Mammary epithelial cell (primary cell): ENCODE measurements at regions of chr10 and their contacts with region 1.

Region 1: GRCh38 chr10:120423431-120424197 is 33.4 kb upstream of the PLPP4 start:
- DNase-seq: peak; percentile 61
- H3K4me3 ChIP-seq: no peak overlapping the region
- H3K27ac ChIP-seq: no peak overlapping the region
- H3K4me1 ChIP-seq: peaks cover 12% of the 10 kb centered on the region
- H3K27me3 ChIP-seq: no peaks in the 10 kb centered on the region
- CTCF ChIP-seq: peak; percentile 98

Region 2: GRCh38 chr10:119852822-119853221 is 570.8 kb before region 1 on chr10:
- CTCF ChIA-PET with region 1: no interaction called
- dilution Hi-C with region 1: no loop called
- in situ Hi-C with region 1: no loop called
- intact Hi-C with region 1: no loop called
- DNase-seq: no peak
- H3K4me3 ChIP-seq: no peak overlapping the region
- H3K27ac ChIP-seq: no peak overlapping the region
- H3K4me1 ChIP-seq: peaks cover 13% of the 10 kb centered on the region
- H3K27me3 ChIP-seq: no peaks in the 10 kb centered on the region
- CTCF ChIP-seq: no peak

Region 3: GRCh38 chr10:120600871-120601649 is 177.4 kb after region 1 on chr10:
- CTCF ChIA-PET with region 1: interaction called, 4 read pairs
- dilution Hi-C with region 1: no loop called
- in situ Hi-C with region 1: no loop called
- intact Hi-C with region 1: loop called (anchors 1 kb)
- DNase-seq: peak; percentile 5
- H3K4me3 ChIP-seq: no peak overlapping the region
- H3K27ac ChIP-seq: no peak overlapping the region
- H3K4me1 ChIP-seq: no peaks in the 10 kb centered on the region
- H3K27me3 ChIP-seq: no peaks in the 10 kb centered on the region
- CTCF ChIP-seq: peak in 1 of 2 donors; percentile 34

Region 4: DNA sequence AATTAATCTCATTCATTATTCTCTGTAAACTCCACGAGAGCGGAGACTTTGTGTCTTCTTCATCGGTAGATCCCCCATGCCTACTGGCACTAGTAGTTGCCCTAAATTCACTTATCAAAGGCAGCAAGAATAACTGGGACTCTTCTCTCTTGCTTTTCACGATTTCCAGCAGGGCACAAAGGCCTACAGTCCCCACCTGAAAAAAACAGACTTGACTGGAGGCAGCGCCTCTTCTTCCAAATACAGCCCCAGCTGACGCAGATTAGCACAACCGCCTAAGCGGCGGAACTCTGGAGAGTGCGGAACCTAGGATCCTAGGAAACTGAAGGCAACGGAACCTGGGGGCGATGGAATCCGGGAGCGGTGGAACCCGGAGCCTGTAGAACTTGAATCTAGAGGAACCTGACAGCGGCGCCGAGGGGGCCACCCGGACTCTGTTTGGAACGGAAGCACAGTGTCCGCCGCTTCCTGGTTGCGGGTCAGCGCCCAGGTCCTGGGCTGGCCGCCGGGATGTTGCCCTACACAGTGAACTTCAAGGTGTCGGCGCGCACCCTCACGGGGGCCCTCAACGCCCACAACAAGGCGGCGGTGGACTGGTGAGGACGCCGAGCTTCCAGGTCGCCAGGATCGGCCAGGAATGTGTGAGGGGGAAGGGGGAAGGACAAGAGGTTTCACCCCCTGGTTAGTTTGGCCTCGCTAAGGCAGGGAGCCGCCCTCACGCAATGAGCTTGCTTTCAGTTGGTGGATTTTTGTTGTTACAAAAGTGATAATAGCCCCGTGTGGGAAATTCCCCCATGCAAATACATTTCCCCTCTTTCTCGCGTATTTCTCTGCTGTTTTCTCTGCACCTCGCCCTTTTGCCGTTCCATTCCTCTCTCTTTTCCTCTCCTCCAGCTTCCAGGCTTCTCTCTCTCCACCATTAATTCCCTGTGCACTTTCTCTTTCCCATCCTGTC is 427.6 kb after region 1 on chr10 and contains the start of gene WDR11:
- CTCF ChIA-PET with region 1: no interaction called
- dilution Hi-C with region 1: no loop called
- in situ Hi-C with region 1: no loop called
- intact Hi-C with region 1: loop called (anchors 5 kb)
- DNase-seq: peak; percentile 92
- H3K4me3 ChIP-seq: peak within 1 kb of the TSS; percentile 68 to 84 (median 77)
- H3K27ac ChIP-seq: peak within 1 kb of the TSS; percentile 77
- H3K4me1 ChIP-seq: peaks cover 4% of the 10 kb centered on the region
- H3K27me3 ChIP-seq: no peaks in the 10 kb centered on the region
- CTCF ChIP-seq: no peak
- total RNA-seq, gene WDR11: 57.8 to 91.5 TPM